AG04450 (cell line): ENCODE measurements at regions of chr9 and their contacts with region 1.

Region 1: GRCh38 chr9:33778700-33779351 is 16.5 kb upstream of the PRSS3 start:
- DNase-seq: no peak
- H3K4me3 ChIP-seq: no peak overlapping the region
- H3K27ac ChIP-seq: no peak overlapping the region
- H3K27me3 ChIP-seq: no peaks in the 10 kb centered on the region
- CTCF ChIP-seq: peak; percentile 91

Region 2: DNA sequence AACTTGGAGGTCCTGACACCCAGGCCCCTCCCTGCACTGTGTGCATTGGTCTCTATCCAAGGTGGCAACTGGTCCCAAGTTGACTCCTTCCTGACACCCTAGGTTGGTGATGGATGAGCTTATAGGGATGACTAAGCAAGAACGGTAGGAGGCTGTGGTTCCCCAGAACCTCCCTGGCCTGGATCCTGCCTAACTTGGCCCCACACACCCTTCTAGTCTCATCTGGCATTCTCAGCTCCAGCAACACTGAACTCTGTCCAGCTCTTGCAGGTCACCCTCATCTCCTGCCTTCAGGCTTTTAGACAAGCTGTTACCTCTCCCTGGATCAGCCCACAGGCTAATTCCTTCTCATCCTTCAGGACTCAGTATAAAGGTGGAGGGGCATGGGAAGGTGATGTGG is 347.9 kb before region 1 on chr9:
- CTCF ChIA-PET with region 1: no interaction called
- POLR2A ChIA-PET with region 1: no interaction called
- DNase-seq: no peak
- H3K4me3 ChIP-seq: no peak overlapping the region
- H3K27ac ChIP-seq: no peak overlapping the region
- H3K27me3 ChIP-seq: peaks cover 17% of the 10 kb centered on the region
- CTCF ChIP-seq: no peak

Region 3: DNA sequence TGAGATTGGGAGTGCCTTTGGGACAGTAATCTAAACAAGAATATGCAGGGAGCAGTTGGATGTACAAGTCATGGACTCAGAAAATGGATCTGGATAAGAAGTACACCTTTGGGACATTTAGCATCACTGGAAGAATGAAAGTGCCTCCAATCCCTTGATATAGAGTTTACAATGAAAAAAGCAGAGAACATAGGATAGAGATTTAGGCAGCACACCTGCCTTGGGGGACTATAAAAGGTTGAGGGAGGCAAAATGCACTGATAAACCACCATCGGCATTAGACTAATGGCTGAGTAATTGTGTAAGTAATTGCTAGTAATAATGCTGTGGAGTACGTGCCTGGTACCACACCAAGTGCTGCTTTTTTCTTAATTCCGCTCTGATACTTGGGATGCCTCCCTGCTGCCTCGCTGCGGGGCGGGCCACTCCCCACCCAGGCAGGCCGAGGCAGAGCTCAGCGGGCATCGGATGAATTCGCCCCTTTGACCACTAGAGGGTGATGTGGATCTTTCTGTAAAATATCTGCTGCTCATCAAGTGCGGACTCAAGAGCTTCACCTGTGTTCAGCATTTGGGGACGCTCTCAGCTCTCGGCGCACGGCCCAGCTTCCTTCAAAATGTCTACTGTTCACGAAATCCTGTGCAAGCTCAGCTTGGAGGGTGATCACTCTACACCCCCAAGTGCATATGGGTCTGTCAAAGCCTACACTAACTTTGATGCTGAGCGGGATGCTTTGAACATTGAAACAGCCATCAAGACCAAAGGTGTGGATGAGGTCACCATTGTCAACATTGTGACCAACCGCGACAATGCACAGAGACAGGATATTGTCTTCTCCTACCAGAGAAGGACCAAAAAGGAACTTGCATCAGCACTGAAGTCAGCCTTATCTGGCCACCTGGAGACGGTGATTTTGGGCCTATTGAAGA is 154.9 kb before region 1 on chr9:
- CTCF ChIA-PET with region 1: interaction called, 10 read pairs
- POLR2A ChIA-PET with region 1: no interaction called
- DNase-seq: peak; percentile 33
- H3K4me3 ChIP-seq: no peak overlapping the region
- H3K27ac ChIP-seq: no peak overlapping the region
- H3K27me3 ChIP-seq: peaks cover 2% of the 10 kb centered on the region
- CTCF ChIP-seq: peak; percentile 78

Region 4: GRCh38 chr9:33737811-33738606 is 40.8 kb before region 1 on chr9:
- CTCF ChIA-PET with region 1: interaction called, 45 read pairs
- POLR2A ChIA-PET with region 1: interaction called, 4 read pairs
- DNase-seq: peak; percentile 29
- H3K4me3 ChIP-seq: no peak overlapping the region
- H3K27ac ChIP-seq: no peak overlapping the region
- H3K27me3 ChIP-seq: no peaks in the 10 kb centered on the region
- CTCF ChIP-seq: peak; percentile 86

Region 5: GRCh38 chr9:33750307-33750838 is 28.5 kb before region 1 on chr9:
- CTCF ChIA-PET with region 1: interaction called, 11 read pairs
- POLR2A ChIA-PET with region 1: no interaction called
- DNase-seq: no peak
- H3K4me3 ChIP-seq: peak overlapping the region; percentile 58
- H3K27ac ChIP-seq: no peak overlapping the region
- H3K27me3 ChIP-seq: peaks cover 13% of the 10 kb centered on the region
- CTCF ChIP-seq: no peak

Region 6: DNA sequence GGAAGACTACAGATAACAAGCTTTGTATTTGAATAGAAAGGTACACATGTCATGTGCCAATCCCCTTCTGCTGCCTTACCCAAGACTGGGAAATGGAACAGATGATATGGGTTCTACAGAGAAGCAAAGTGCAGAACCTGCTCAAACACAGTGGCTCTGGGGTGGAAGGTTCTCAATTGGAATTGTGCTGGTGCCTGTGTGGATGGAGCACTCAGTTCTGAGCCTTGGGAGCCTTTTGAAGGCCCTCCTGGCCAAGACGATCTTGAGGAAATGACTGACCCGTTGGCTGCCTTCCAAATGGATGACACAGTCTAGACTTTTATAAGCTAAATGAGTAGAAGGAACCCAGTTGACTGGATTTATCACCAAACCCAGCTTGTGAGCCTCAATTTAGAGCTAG is 12.3 kb after region 1 on chr9:
- CTCF ChIA-PET with region 1: interaction called, 21 read pairs
- POLR2A ChIA-PET with region 1: no interaction called
- DNase-seq: no peak
- H3K4me3 ChIP-seq: no peak overlapping the region
- H3K27ac ChIP-seq: no peak overlapping the region
- H3K27me3 ChIP-seq: peaks cover 16% of the 10 kb centered on the region
- CTCF ChIP-seq: no peak